ENCODE measurements at regions of chr2 and their contacts with region 1.

Region 1: GRCh38 chr2:71068218-71069035 is at the start of gene NAGK:
- DNase-seq: peak; percentile 98
- total RNA-seq, gene NAGK: 45.0 TPM

Region 2: DNA sequence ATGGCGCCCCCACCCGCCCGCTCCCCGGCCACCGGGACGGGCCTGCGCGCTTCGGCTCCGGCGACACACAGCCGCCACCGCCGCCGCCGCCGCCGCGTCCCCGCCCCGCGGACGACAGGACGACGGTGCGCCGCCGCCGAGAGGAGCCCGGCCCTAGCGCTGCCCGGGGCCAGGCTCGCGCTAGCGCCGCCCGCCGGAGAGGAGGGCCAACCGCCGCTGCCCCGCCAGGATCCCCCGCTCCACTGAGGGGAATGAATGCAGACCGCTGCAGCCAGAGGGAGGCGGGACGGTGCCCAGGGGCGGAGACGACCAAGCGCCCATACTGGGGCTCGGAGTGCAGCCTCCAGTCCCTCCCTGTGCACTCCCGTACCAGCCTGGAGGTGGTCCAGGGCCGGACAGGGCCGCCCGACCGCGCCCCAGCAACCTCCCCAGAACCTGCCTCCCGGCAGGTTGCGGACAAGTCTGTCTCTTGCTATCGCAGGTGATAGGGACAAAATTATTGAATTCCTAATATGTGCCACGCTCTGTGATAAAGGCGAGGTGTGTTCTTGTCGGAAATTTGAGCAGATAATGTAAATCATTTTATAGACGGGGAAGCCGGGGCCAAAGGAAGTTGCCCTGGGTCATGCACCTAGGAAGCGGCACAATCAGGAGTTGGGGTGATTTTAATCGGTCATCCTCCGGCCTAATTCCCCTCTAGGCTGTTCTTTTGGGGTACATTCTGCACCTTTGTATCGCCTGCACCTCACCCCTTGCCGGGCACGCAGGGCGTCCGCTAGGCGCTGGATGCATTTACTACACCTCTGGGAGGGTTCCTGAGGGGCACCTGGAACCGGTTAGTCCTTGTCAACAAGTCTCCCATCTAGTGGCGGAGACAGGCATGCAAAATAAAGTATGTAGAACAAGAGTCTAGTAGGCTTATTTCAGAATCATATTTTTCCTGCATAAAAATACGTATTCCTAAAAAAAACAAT is 73.4 kb before region 1 on chr2 and contains the start of gene TEX261:
- intact Hi-C with region 1: loop called (anchors 5 kb)
- DNase-seq: peak; percentile 95
- total RNA-seq, gene TEX261: 46.1 TPM

Region 3: GRCh38 chr2:71130113-71130904 is 61.9 kb after region 1 on chr2 and contains the starts of genes MCEE and MPHOSPH10:
- intact Hi-C with region 1: loop called (anchors 1 kb)
- DNase-seq: peak; percentile 97
- total RNA-seq, gene MCEE: 26.3 TPM
- total RNA-seq, gene MPHOSPH10: 27.8 TPM

Measured in cardiac septum (tissue), 1 donor.